ENCODE measurements at regions of chr12 and their contacts with region 1.

Region 1: DNA sequence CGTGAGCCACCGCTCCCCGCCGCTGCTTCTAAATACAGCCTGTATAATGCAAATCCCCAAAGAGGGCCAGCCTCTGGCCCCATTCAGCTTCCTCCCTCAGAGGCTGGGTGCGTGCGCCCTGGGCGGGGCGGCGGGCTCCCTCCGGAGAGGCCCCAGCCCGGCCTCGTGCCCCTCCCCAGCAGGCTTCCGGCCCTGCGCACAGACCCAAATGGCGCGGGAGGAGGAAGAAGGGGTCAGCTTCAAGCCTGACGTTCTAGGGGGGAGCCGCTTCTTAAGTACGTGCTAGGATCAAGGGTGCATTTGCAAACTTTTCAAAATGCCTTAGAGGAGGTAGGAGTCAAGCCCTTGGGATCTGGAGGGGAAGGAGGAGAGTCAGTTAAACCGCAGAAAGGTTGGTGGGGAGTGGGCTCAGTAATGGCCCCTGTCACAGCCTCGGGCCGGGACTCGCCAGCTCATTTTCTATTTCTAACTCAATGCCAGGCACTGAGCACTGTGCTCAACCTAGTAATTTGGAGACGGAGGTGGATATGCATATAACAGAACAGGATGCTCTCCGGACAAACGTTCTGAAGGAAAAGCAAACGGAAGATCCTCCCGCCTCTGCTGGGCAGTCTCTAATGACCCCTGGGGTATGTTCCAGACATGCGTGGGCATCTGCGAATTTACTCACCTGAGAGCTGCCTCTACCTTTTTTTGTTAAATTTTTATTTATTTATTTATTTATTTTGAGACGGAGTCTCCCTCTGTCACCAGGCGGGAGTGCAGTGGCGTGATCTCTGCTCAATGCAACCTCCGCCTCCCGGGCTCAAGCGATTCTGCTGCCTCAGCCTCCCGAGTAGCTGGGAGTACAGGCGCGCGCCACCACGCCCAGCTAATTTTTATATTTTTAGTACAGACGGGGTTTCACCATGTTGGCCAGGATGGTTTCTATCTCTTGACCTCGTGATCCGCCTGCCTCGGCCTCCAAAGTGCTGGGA is 32.3 kb downstream of the NINJ2 start:
- DNase-seq: peak; percentile 82
- ATAC-seq: peak; percentile 97
- H3K4me3 Mint-ChIP-seq: peak overlapping the region; percentile 86
- H3K27ac Mint-ChIP-seq: peak overlapping the region; percentile 93
- H3K4me1 Mint-ChIP-seq: peaks cover 28% of the 10 kb centered on the region
- H3K27me3 Mint-ChIP-seq: no peaks in the 10 kb centered on the region
- CTCF ChIP-seq: no peak

Region 2: GRCh38 chr12:546921-547845 is 83.8 kb before region 1 on chr12:
- CTCF ChIA-PET with region 1: no interaction called
- POLR2A ChIA-PET with region 1: no interaction called
- intact Hi-C with region 1: no loop called
- DNase-seq: peak; percentile 66
- ATAC-seq: peak; percentile 86
- H3K4me3 Mint-ChIP-seq: no peak overlapping the region
- H3K27ac Mint-ChIP-seq: no peak overlapping the region
- H3K4me1 Mint-ChIP-seq: peaks cover 19% of the 10 kb centered on the region
- H3K27me3 Mint-ChIP-seq: peaks cover 8% of the 10 kb centered on the region
- CTCF ChIP-seq: peak; percentile 97

Region 3: DNA sequence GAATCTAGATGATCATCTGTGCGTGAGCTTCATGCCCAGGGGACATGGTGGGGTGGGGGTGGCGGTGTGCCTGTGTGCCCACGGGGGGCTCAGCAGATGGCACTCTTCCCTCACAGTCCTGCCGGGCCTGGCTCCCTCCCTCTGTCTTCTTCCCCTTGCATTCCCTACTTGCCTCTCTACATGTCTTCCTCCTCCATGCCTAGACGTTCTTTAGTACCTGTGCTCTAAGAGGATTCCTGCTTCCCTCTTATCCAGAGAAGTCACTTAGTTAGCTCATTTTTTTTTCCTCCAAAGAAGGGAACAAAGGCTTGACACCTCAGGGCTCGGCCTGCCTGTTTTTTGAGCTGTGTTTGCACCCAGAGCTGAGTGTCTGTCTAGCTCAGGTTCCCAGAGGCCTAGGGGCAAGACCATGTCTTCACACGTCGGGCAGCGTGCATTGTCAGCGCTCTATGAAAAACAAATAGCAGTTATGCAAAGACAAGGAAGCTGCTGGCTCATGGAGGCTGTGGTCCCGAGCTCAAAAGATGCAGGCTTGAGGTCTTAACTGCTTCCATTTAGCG is 16.5 kb before region 1 on chr12:
- CTCF ChIA-PET with region 1: interaction called, 10 read pairs
- POLR2A ChIA-PET with region 1: interaction called, 5 read pairs
- intact Hi-C with region 1: no loop called
- DNase-seq: peak; percentile 66
- ATAC-seq: peak; percentile 55
- H3K4me3 Mint-ChIP-seq: no peak overlapping the region
- H3K27ac Mint-ChIP-seq: no peak overlapping the region
- H3K4me1 Mint-ChIP-seq: peaks cover 35% of the 10 kb centered on the region
- H3K27me3 Mint-ChIP-seq: no peaks in the 10 kb centered on the region
- CTCF ChIP-seq: peak; percentile 47

Region 4: DNA sequence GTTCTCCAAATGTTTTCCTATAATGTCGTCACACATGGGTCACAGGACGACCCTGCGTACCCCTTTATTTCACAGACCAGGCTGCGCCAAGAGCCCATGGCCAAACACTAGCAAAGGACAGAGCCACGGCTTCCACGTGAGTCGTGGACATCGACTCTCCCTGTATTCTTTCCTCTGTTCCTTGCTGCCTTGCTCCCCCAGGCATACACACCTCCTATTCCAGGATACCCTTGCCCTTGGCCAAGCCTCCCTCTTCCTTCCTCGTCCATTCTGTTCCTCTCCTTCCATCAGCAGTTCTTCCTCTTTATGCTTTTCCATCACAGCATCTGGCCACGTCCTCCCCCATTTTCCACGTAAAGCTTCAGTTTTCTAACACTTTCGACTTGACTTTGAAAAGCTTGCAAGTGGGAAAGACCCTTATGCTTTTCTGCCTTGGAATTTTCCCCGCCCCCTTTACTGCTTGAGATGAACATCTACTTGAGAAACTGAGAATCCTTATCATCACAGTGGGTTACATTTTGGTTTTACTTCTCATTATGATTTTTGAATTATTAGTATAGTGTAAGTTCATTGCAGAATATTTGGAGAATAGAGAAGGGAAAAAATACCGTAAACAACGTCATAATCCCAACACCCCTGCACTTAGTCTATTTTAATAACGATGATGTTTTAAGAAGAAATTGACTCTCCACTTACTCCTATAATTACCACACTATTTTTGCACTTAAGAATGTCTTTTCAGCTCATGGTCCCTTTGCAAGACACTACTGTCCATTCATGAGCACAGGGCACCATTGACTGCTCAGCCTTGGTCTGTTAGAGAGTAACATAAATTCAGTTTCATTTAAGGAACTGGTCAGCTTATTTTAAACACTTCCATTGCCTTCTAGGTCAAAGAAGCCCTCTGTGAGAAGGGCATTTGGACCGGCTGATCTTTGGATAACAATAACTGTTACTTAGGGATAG is 48.1 kb after region 1 on chr12:
- CTCF ChIA-PET with region 1: no interaction called
- POLR2A ChIA-PET with region 1: no interaction called
- intact Hi-C with region 1: no loop called
- DNase-seq: peak; percentile 53
- ATAC-seq: no peak
- H3K4me3 Mint-ChIP-seq: no peak overlapping the region
- H3K27ac Mint-ChIP-seq: peak overlapping the region; percentile 52
- H3K4me1 Mint-ChIP-seq: peaks cover 48% of the 10 kb centered on the region
- H3K27me3 Mint-ChIP-seq: no peaks in the 10 kb centered on the region
- CTCF ChIP-seq: no peak

Region 5: GRCh38 chr12:720231-720941 is 89.4 kb after region 1 on chr12:
- CTCF ChIA-PET with region 1: no interaction called
- POLR2A ChIA-PET with region 1: no interaction called
- intact Hi-C with region 1: no loop called
- DNase-seq: no peak
- ATAC-seq: no peak
- H3K4me3 Mint-ChIP-seq: no peak overlapping the region
- H3K27ac Mint-ChIP-seq: peak overlapping the region; percentile 11
- H3K4me1 Mint-ChIP-seq: peaks cover 58% of the 10 kb centered on the region
- H3K27me3 Mint-ChIP-seq: no peaks in the 10 kb centered on the region
- CTCF ChIP-seq: no peak